PC-9 (cell line): ENCODE measurements at regions of chr17 and their contacts with region 1.

Region 1: DNA sequence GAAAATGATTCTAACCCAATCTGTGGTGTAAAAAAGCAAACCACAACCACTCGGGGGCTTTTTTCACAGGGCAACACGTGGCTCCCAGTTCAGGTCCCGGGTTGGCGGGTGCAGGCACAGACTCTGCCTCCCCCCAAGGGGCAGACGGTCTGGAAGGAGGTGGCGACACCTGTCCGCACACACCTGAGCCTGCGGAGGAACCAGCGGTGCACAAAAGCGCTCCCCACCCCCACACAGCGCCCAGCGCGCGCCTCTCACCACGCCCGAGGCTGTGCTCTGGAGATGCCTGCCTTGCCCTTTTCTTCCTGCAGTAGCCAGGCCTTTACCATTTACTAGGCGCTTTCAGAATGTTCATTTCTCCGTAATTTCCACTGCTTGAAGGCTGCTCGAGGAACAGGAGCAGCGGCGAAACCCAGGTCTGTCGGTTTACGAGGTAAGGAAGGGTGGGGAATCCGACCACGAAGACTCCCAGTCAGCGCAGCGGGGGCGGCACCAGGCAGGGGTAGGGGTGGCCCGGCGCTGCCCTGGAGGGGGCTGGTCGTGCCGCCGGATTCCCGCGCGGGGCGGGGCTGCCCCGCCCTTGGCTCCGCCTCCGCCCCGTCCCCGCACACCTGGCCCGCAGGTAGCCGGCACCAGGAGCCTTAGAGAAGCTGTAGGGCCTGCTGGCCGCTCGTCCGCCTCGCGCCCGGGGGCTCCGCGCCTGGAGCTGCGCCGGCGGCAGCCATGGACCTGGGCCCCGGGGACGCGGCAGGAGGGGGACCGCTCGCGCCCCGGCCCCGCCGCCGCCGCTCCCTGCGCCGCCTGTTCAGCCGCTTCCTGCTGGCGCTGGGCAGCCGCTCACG is at the start of gene USP43:
- DNase-seq: peak; percentile 59 to 90
- H3K4me3 ChIP-seq: peak within 1 kb of the TSS; percentile 94
- H3K27ac ChIP-seq: peak within 1 kb of the TSS; percentile 92
- H3K4me1 ChIP-seq: peaks cover 25% of the 10 kb centered on the region
- H3K27me3 ChIP-seq: no peaks in the 10 kb centered on the region
- CTCF ChIP-seq: peak; percentile 32; the same call in 1 of the 2 replicates
- total RNA-seq, gene USP43: 16.0 and 19.2 TPM in 2 replicates

Region 2: DNA sequence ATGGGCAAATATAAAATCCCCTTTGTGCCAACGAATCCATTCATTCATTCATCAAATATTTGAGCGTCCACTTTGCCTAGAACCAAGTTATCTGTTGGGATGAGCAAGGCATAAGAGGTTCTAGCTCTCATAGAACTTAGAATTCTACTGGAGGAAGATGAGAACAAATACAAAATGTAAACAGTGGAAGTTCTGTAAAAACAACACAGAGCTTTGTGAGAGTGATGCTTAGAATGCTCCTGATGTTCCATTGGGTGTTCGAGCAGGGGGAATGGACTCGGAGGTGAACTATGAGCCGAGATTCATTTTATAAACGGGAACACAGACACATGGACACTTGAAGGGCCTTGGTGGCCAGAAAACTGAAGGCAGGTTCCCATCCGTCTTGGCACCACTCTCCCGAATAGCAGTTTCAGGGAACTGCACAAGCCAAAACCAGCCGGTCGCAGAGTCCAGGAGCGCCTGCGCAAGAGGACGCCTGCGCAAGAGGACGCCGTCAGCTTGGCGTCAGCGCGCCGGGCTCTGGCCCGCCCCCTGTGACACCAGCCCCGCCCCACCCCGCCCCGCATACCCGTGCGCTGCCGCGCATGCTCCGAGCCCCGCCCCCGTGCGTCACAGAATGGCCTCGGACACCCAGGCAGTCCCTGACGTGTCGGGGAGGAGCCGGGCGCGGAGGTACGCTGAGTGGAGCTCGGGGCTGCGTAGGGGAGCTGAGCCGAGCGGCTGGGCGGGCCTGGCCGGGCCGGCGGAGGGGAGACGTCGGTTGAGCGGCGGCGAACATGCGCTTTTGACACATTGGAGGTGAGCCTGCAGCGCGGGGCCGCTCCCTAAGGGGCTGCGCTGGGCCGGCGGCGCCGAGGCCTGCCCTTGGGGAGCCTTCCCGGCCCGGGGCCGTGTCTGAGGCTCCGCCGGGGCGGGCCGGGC is 1209.6 kb before region 1 on chr17 and contains the start of gene NDEL1:
- CTCF ChIA-PET with region 1: no interaction called
- POLR2A ChIA-PET with region 1: interaction called, 35 read pairs
- intact Hi-C with region 1: no loop called
- DNase-seq: peak; percentile 86 to 99
- H3K4me3 ChIP-seq: peak within 1 kb of the TSS; percentile 84
- H3K27ac ChIP-seq: peak within 1 kb of the TSS; percentile 86
- H3K4me1 ChIP-seq: peaks cover 9% of the 10 kb centered on the region; the same call in 1 of the 2 replicates
- H3K27me3 ChIP-seq: no peaks in the 10 kb centered on the region
- CTCF ChIP-seq: no peak
- total RNA-seq, gene NDEL1: 60.8 and 78.4 TPM in 2 replicates

Region 3: DNA sequence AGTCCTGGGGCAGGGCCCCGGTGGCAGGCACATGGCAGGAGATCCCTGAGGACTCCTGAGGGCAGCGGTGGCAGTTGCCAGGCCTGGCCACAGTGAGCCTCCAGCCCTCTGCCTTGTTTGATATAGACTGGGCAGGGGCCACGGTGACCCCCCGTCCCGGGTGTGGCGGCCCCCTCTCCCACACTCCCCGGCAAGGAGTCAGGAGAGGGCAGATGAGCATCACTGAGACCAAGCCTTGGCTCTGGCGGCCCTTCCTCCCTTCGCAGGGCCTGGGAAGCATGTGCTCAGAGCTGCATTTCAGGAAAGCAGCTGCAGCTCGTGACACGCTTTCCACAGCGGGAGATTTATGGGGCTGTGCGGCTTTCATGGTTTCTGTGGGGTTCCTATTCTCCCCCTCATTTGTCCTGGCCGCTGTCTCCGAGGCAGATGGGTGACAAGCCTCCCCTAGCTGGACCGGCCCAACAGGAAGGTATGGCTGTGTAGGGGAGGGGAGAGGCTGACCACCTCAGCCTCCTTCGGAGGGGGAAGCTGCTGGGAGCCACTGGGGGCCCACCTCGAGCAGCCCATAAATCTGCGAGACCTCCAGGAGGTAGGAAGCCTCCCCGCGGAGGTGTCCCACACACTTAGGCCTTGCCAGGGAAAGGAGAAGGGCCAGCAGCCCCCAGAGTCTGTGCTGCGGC is 412.4 kb before region 1 on chr17:
- CTCF ChIA-PET with region 1: no interaction called
- POLR2A ChIA-PET with region 1: no interaction called
- intact Hi-C with region 1: no loop called
- DNase-seq: no peak
- H3K4me3 ChIP-seq: no peak overlapping the region
- H3K27ac ChIP-seq: no peak overlapping the region
- H3K4me1 ChIP-seq: no peaks in the 10 kb centered on the region
- H3K27me3 ChIP-seq: no peaks in the 10 kb centered on the region
- CTCF ChIP-seq: no peak

Region 4: DNA sequence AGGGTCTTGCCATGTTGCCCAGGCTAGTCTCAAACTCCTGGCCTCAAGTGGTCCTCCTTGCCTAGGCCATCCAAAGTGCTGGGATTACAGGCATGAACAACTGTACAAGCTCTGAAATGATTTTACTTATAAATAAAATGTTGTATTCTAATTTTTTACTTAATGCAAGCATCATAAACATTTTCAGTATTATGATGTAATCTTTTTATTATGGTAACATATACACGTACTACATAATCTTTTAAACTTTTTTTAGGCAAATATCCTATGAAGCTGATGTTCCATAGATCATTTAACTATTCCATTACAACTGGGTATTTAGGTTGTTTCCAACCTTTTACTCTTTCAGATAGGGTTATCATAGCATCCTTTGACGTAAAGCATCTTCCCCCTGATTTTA is 33.6 kb before region 1 on chr17:
- CTCF ChIA-PET with region 1: no interaction called
- POLR2A ChIA-PET with region 1: no interaction called
- intact Hi-C with region 1: no loop called
- DNase-seq: no peak
- H3K4me3 ChIP-seq: no peak overlapping the region
- H3K27ac ChIP-seq: no peak overlapping the region
- H3K4me1 ChIP-seq: no peaks in the 10 kb centered on the region
- H3K27me3 ChIP-seq: no peaks in the 10 kb centered on the region
- CTCF ChIP-seq: no peak

Region 5: GRCh38 chr17:9669531-9670008 is 24.4 kb after region 1 on chr17:
- CTCF ChIA-PET with region 1: interaction called, 5 read pairs
- POLR2A ChIA-PET with region 1: interaction called, 6 read pairs
- intact Hi-C with region 1: loop called (anchors 1 kb)
- DNase-seq: peak; percentile 78 to 83
- H3K4me3 ChIP-seq: peak overlapping the region; percentile 20; the same call in 1 of the 2 replicates
- H3K27ac ChIP-seq: peak overlapping the region; percentile 74
- H3K4me1 ChIP-seq: peaks cover 54% of the 10 kb centered on the region
- H3K27me3 ChIP-seq: no peaks in the 10 kb centered on the region
- CTCF ChIP-seq: no peak

Region 6: DNA sequence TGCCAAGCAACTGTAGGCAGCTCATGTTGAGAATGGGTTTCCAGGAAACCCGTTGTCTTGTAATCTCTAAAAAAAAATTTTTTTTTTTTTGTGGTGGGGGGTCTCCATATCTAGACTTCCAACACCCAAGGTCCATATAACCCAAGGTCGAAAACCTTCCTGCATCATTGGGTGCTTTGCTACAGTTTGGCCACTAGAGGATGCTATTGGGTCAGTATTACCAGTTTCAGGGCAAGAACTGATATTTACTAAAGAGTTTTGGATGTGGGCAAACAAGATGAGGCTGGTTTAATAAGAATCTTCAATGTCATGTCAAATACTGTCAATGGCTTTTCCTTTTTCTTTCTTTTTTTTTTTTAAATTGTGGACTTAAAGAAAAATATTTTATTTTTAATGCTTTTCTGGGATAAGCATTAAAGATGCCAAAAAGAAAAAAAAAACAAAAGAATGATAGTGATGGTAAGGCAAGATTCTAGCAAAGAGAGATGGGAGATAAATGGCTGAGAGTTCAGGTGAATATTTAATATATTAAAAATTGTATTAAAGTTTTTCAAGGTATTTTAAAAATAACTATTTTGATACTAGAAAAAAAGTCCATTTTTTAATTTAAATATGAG is 84.0 kb after region 1 on chr17:
- CTCF ChIA-PET with region 1: no interaction called
- POLR2A ChIA-PET with region 1: interaction called, 5 read pairs
- intact Hi-C with region 1: loop called (anchors 2 kb)
- DNase-seq: peak; percentile 29 to 47
- H3K4me3 ChIP-seq: no peak overlapping the region
- H3K27ac ChIP-seq: no peak overlapping the region
- H3K4me1 ChIP-seq: peaks cover 6% of the 10 kb centered on the region
- H3K27me3 ChIP-seq: no peaks in the 10 kb centered on the region
- CTCF ChIP-seq: peak; percentile 95

Region 7: GRCh38 chr17:9837551-9838471 is 192.7 kb after region 1 on chr17:
- CTCF ChIA-PET with region 1: interaction called, 3 read pairs
- POLR2A ChIA-PET with region 1: no interaction called
- intact Hi-C with region 1: loop called (anchors 2 kb)
- DNase-seq: peak; percentile 41 to 88
- H3K4me3 ChIP-seq: peak overlapping the region; percentile 37; the same call in 1 of the 2 replicates
- H3K27ac ChIP-seq: peak overlapping the region; percentile 99
- H3K4me1 ChIP-seq: peaks cover 51% of the 10 kb centered on the region
- H3K27me3 ChIP-seq: no peaks in the 10 kb centered on the region
- CTCF ChIP-seq: no peak